Heart left ventricle (tissue), 16 donors: ENCODE measurements at regions of chr2 and their contacts with region 1.

Region 1: DNA sequence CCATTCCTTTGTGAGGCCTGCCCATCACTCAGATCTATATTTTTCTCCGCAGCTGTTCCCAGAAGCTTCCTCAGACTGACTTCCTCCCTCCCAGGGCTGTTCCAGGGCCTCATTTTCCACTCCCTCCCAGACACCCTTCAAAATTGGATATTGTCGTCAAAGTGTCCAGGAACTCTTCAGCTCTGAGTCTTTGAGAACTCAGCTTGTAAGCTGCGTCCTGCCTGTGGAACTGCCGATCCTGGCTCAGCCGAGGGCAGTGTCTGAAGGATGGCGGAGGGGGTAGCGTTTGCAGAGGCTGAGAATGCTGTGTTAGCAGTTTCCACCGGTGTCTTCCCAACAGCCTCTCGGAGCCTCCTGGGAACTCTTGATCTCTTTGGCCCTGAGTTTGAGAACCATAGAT is 27.1 kb downstream of the NCK2 start:
- DNase-seq: peak in 3 of 5 donors; percentile 45 to 51 (median 50)
- ATAC-seq: peak; percentile 45 to 79 (median 53)
- H3K4me3 ChIP-seq: peak overlapping the region in 1 of 12 donors; percentile 20
- H3K27ac ChIP-seq: peak overlapping the region; percentile 36 to 73 (median 50)
- H3K4me1 ChIP-seq: peaks cover 17 to 70% (median 51%) of the 10 kb centered on the region in 12 donors
- H3K27me3 ChIP-seq: no peaks in the 10 kb centered on the region
- CTCF ChIP-seq: no peak
- POLR2A ChIP-seq: no peak

Region 2: DNA sequence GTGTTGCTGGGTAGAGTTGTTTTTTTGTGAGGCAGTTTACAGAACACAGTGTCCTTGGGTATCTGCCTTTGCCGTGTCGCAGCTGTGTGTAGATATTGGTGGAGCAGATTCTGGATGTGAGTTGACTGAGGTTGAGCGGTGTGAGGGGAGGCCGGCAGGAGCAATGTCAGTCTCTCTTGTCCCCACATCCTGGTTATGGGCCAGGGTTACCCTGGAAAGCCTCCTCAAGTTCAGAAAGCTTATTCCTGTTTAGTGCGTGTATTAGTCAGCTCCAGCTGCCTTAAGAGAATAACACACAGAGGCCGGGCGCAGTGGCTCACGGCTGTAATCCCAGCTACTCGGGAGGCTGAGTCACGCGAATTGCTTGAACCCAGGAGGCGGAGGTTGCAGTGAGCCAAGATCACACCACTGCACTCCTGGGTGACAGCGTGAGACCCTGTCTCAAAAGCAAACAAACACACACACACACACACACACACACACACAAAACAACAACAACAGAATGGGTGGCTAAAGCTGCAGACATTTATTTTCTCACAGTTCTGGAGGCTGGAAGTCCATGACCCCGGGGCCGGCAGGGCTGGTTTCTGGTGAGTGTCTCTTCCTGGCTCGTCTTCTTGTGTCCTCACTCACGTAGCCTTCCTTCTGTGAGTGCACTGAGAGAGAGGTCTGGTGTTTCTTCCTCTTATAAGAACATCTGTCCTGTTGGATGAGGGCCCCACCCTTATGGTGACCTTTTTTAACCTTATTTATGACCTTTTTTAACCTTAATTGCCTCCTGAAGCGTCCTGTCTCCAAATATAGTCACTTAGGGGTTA is 22.0 kb before region 1 on chr2:
- intact Hi-C with region 1: loop called in 1 of 10 experiments (anchors 2 kb)
- DNase-seq: no peak
- ATAC-seq: peak in 1 of 4 donors; percentile 45
- H3K4me3 ChIP-seq: no peak overlapping the region
- H3K27ac ChIP-seq: peak overlapping the region in 1 of 12 donors; percentile 47
- H3K4me1 ChIP-seq: peaks cover 6 to 84% (median 55%) of the 10 kb centered on the region in 12 donors
- H3K27me3 ChIP-seq: no peaks in the 10 kb centered on the region
- CTCF ChIP-seq: no peak
- POLR2A ChIP-seq: no peak

Region 3: GRCh38 chr2:105853356-105854132 is 81.7 kb after region 1 on chr2:
- intact Hi-C with region 1: no loop called
- DNase-seq: no peak
- ATAC-seq: no peak
- H3K4me3 ChIP-seq: no peak overlapping the region
- H3K27ac ChIP-seq: no peak overlapping the region
- H3K4me1 ChIP-seq: peaks cover 0 to 38% (median 0%) of the 10 kb centered on the region in 12 donors
- H3K27me3 ChIP-seq: no peaks in the 10 kb centered on the region
- CTCF ChIP-seq: no peak
- POLR2A ChIP-seq: no peak